ENCODE measurements at regions of chr12 and their contacts with region 1.

Region 1: GRCh38 chr12:50043854-50044253 is 13.5 kb upstream of the ASIC1 start:
- DNase-seq: no peak
- H3K4me3 Mint-ChIP-seq: no peak overlapping the region
- H3K27ac Mint-ChIP-seq: no peak overlapping the region
- H3K4me1 Mint-ChIP-seq: peaks cover 5% of the 10 kb centered on the region
- H3K27me3 Mint-ChIP-seq: no peaks in the 10 kb centered on the region

Region 2: GRCh38 chr12:49983892-49984291 is 60.0 kb before region 1 on chr12:
- CTCF ChIA-PET with region 1: interaction called, 12 read pairs
- intact Hi-C with region 1: no loop called
- DNase-seq: no peak
- H3K4me3 Mint-ChIP-seq: no peak overlapping the region
- H3K27ac Mint-ChIP-seq: no peak overlapping the region
- H3K4me1 Mint-ChIP-seq: peaks cover 1% of the 10 kb centered on the region
- H3K27me3 Mint-ChIP-seq: no peaks in the 10 kb centered on the region

Measured in activated naive CD4-positive, alpha-beta T cell treated with anti-CD3 and anti-CD28 coated beads for 36 hours (primary cell).